A549 (cell line): ENCODE measurements at regions of chr4 and their contacts with region 1.

Region 1: DNA sequence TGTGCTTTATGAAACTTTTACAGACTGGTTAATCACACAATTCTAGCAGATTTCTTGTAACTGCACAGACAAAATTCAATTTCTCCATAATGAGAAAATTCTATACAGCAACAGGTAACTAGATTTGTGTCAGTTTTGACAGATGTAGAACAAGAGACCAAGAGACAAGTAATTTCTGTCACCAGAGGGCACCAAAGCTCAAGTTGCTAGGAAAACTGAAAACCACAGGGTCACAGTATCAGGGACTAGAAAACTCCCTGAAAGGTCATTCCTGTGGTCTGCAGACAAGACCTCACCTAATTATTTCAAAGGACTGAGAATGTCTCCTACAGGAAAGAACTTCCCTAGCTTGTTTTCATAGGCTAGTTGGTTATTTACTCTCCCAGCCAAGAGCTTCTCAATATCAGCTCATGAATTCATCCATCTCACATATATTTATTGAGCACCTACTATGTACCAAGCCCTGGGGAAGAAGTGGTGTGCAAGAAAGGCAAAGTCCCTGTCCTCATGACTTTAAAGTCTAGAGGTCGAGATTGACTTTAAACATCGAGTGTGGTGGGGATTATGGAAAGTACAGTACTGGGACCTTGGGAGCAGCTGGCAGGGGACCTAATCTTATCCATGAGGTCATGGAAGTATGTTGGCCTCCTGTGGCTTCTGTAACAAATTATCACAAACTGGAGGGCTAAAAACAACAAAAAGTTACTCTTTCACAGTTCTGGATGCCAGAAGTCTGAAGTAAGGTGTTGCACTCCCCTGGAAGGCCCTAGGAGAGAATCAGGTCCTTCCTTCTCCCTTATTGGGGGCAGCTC is 47.8 kb upstream of the SETD7 start:
- DNase-seq: peak; percentile 38 to 80
- ATAC-seq: peak; percentile 43 to 51; a peak in 3 of 6 replicates
- H3K4me3 ChIP-seq: no peak overlapping the region
- H3K27ac ChIP-seq: peak overlapping the region; percentile 66 to 94
- H3K4me1 ChIP-seq: peaks cover 67% of the 10 kb centered on the region
- CTCF ChIP-seq: peak; percentile 73
- EP300 ChIP-seq: no peak
- POLR2A ChIP-seq: no peak
- RAD21 ChIP-seq: peak; percentile 77 to 81

Region 2: DNA sequence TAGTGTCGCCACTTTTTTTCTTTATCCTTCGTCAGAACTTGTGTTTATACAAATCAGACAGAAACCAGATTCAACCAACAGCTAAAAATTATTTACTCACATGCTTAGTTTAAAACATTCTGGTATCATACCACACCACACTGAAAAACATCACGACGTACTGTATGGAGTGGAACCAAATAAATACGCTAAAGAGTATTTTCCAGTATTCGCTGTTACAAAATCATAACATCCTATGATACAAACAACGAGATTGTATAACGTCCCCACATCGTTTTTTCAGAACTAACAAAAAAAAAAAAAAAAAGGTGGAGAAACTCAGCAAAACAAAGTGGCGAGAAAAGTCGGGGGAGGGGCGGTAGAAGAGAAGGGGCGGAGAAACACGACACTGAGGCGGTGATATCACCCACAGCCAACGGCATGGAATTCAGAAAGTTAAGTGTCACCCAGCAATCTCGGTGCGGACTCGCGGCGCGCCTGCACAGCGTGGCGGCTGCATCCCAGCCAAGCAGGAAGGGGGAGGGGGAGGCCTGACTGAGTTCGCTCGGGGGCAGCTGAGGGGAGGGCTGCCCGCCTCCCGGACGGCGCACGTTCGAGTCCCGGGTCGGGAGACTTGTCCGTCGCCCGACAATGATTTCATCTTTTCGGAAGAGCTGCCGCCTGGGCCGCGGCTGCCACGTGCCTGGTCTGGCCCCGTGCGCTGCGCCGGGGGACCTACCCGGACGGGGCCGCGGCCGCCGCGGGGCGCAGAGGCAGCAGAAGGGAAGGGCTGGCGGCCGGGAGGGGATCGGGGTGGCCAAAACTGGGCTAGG is 48.7 kb before region 1 on chr4:
- CTCF ChIA-PET with region 1: interaction called, 12 read pairs
- POLR2A ChIA-PET with region 1: interaction called, 7 read pairs
- DNase-seq: peak; percentile 53 to 91
- ATAC-seq: peak; percentile 61 to 68
- H3K4me3 ChIP-seq: peak overlapping the region; percentile 88
- H3K27ac ChIP-seq: peak overlapping the region; percentile 98 to 99
- H3K4me1 ChIP-seq: peaks cover 58% of the 10 kb centered on the region
- CTCF ChIP-seq: no peak
- EP300 ChIP-seq: no peak
- POLR2A ChIP-seq: peak; percentile 82
- RAD21 ChIP-seq: no peak

Region 3: GRCh38 chr4:139589336-139590018 is 14.3 kb before region 1 on chr4:
- CTCF ChIA-PET with region 1: interaction called, 17 read pairs
- POLR2A ChIA-PET with region 1: no interaction called
- DNase-seq: no peak
- ATAC-seq: no peak
- H3K4me3 ChIP-seq: no peak overlapping the region
- H3K27ac ChIP-seq: no peak overlapping the region
- H3K4me1 ChIP-seq: peaks cover 36% of the 10 kb centered on the region
- CTCF ChIP-seq: no peak
- EP300 ChIP-seq: no peak
- POLR2A ChIP-seq: no peak
- RAD21 ChIP-seq: no peak

Region 4: GRCh38 chr4:139628184-139629012 is 24.6 kb after region 1 on chr4:
- CTCF ChIA-PET with region 1: interaction called, 109 read pairs
- POLR2A ChIA-PET with region 1: interaction called, 9 read pairs
- DNase-seq: no peak
- ATAC-seq: no peak
- H3K4me3 ChIP-seq: no peak overlapping the region
- H3K27ac ChIP-seq: no peak overlapping the region
- H3K4me1 ChIP-seq: no peaks in the 10 kb centered on the region
- CTCF ChIP-seq: no peak
- EP300 ChIP-seq: no peak
- POLR2A ChIP-seq: no peak
- RAD21 ChIP-seq: no peak

Region 5: DNA sequence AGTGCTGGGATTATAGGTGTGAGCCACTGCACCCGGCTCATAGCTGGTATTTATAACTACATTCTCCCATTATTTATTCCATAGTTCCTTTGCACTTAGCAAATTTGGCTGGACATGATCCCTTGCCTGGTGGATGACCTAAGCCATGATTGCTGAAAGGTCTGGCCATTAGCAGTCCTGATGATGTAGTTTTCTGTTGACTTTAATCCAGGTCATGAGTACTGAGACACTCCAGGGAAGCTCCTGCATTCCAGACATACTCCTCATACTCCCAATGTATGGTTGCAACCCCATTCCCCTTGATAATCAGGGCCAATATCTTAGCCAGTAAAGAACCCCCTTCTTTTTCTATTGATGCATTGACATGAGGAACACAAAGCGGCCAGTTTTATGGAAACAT is 37.4 kb after region 1 on chr4:
- CTCF ChIA-PET with region 1: interaction called, 109 read pairs
- POLR2A ChIA-PET with region 1: no interaction called
- DNase-seq: peak; percentile 47 to 83
- ATAC-seq: peak; percentile 91 to 96
- H3K4me3 ChIP-seq: no peak overlapping the region
- H3K27ac ChIP-seq: peak overlapping the region; percentile 82 to 87
- H3K4me1 ChIP-seq: peaks cover 62% of the 10 kb centered on the region
- CTCF ChIP-seq: no peak
- EP300 ChIP-seq: peak; percentile 62 to 63; a peak in 2 of 5 replicates
- POLR2A ChIP-seq: no peak
- RAD21 ChIP-seq: no peak